Activated CD4-positive, alpha-beta T cell treated with anti-CD3 and anti-CD28 coated beads for 36 hours (primary cell): ENCODE measurements at regions of chr3 and their contacts with region 1.

Region 1: DNA sequence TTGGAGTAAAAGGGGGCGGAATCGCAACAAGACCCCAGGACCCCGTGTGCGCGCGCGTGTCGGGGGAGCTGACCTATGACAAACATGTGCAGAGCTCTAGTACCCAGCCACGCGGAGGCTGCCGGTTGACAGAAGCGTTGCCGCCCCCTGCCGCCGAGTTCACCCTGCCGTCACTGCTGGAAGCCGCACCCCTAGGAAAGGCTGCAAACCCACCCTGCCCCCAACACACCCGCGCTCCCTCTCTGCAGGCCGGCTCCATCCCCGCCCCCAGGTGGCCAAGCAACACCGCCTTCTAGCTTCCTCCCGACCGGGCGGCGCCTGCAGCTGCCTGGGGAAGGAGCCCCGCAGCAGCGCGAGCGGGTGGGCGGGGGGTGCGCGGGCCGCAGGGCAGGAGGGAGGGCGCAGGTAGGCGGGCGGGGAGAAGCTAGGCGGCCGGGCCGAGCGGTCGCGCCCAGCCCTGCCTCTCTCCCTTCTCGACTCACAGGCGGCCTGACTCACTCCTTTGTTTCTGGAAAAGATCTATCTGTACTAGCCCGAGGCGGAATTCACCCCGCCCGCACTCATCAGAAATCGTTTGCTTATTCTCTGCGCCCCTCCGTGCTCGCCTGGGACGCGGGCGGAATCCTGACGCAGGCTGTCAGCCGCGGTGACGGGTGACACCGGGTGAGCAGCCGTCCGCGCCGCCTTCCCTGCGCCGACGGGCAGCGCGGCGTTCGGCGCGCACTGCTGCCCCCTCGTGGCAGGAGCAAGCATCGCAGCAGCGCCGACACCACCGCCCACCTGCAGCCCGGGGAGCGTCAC is 160.8 kb downstream of the GAP43 start:
- DNase-seq: peak; percentile 94
- ATAC-seq: peak; percentile 91
- H3K4me3 Mint-ChIP-seq: peak overlapping the region; percentile 81
- H3K27ac Mint-ChIP-seq: peak overlapping the region; percentile 97
- H3K4me1 Mint-ChIP-seq: peaks cover 18% of the 10 kb centered on the region
- H3K27me3 Mint-ChIP-seq: no peaks in the 10 kb centered on the region

Region 2: GRCh38 chr3:115092220-115092791 is 691.8 kb before region 1 on chr3:
- CTCF ChIA-PET with region 1: interaction called, 3 read pairs
- POLR2A ChIA-PET with region 1: no interaction called
- intact Hi-C with region 1: loop called (anchors 5 kb)
- DNase-seq: peak; percentile 74
- ATAC-seq: peak; percentile 44
- H3K4me3 Mint-ChIP-seq: no peak overlapping the region
- H3K27ac Mint-ChIP-seq: no peak overlapping the region
- H3K4me1 Mint-ChIP-seq: peaks cover 41% of the 10 kb centered on the region
- H3K27me3 Mint-ChIP-seq: no peaks in the 10 kb centered on the region

Region 3: DNA sequence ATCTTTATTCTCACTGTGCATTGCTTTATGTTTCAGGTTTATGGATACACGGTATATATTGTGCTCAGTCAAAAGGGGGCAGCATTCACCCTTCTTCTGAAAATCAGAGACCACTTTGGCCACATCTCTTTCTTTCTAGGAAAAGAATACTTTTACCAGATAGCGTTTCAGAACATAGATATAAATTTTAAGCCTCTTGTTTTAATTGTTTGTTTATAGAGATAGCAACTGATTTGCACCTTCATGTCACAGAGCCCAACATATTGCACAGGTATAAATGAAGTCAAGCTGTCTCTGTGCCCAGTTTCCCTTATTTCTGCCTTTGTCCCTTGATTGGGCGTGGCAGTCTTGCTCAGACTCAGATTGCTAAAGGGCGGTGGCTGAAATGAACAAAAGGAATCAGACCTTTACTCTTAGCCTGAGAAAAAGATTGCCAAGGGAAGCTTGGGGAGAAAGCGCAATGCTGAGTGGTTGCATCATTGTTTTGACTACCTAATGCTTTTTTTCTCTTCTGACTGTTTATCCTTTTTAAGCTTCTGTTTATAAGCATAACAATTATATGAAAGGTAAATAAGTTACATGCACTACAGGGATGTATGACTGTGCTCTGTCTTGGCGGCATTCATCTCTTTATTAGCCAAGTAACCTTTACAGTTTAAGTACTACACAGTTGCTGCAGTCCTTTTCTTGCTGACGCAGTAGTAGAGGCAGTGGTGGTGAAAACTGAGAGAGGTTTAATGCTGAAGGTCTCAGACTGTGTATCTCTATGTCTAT is 566.3 kb before region 1 on chr3:
- CTCF ChIA-PET with region 1: interaction called, 5 read pairs
- POLR2A ChIA-PET with region 1: no interaction called
- intact Hi-C with region 1: loop called (anchors 1 kb)
- DNase-seq: peak; percentile 32
- ATAC-seq: no peak
- H3K4me3 Mint-ChIP-seq: no peak overlapping the region
- H3K27ac Mint-ChIP-seq: no peak overlapping the region
- H3K4me1 Mint-ChIP-seq: no peaks in the 10 kb centered on the region
- H3K27me3 Mint-ChIP-seq: peaks cover 1% of the 10 kb centered on the region

Region 4: GRCh38 chr3:115658337-115659181 is 125.6 kb before region 1 on chr3:
- CTCF ChIA-PET with region 1: no interaction called
- POLR2A ChIA-PET with region 1: no interaction called
- intact Hi-C with region 1: loop called in 1 of 2 experiments (anchors 1 kb)
- DNase-seq: peak; percentile 88
- ATAC-seq: peak; percentile 90
- H3K4me3 Mint-ChIP-seq: peak overlapping the region; percentile 66
- H3K27ac Mint-ChIP-seq: peak overlapping the region; percentile 95
- H3K4me1 Mint-ChIP-seq: peaks cover 51% of the 10 kb centered on the region
- H3K27me3 Mint-ChIP-seq: peaks cover 2% of the 10 kb centered on the region

Region 5: DNA sequence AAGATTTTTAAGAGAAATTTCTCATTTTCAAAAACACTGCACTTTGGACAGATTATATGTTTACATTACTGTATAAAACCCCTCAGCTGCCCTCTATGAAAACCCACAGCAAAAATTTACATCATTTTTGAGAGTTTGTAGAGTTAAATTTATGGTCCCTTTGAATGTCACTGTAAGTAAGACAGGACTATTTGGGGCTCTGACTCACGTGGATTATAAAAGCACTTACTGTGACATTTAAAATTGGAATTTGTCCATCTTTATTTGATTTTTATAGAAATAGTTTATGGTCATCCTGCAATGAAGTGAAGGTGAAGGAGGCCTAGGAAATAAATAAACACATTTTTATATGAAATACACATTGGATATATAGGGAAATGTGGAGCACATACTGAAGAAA is 11.2 kb before region 1 on chr3:
- CTCF ChIA-PET with region 1: interaction called, 11 read pairs
- POLR2A ChIA-PET with region 1: no interaction called
- intact Hi-C with region 1: no loop called
- DNase-seq: no peak
- ATAC-seq: no peak
- H3K4me3 Mint-ChIP-seq: no peak overlapping the region
- H3K27ac Mint-ChIP-seq: no peak overlapping the region
- H3K4me1 Mint-ChIP-seq: no peaks in the 10 kb centered on the region
- H3K27me3 Mint-ChIP-seq: peaks cover 6% of the 10 kb centered on the region

Region 6: GRCh38 chr3:115819785-115820384 is 35.7 kb after region 1 on chr3:
- CTCF ChIA-PET with region 1: interaction called, 11 read pairs
- POLR2A ChIA-PET with region 1: interaction called, 4 read pairs
- intact Hi-C with region 1: loop called (anchors 1 to 2 kb)
- DNase-seq: peak; percentile 68
- ATAC-seq: peak; percentile 90
- H3K4me3 Mint-ChIP-seq: no peak overlapping the region
- H3K27ac Mint-ChIP-seq: no peak overlapping the region
- H3K4me1 Mint-ChIP-seq: no peaks in the 10 kb centered on the region
- H3K27me3 Mint-ChIP-seq: no peaks in the 10 kb centered on the region